ENCODE measurements at regions of chr17 and their contacts with region 1.

Region 1: DNA sequence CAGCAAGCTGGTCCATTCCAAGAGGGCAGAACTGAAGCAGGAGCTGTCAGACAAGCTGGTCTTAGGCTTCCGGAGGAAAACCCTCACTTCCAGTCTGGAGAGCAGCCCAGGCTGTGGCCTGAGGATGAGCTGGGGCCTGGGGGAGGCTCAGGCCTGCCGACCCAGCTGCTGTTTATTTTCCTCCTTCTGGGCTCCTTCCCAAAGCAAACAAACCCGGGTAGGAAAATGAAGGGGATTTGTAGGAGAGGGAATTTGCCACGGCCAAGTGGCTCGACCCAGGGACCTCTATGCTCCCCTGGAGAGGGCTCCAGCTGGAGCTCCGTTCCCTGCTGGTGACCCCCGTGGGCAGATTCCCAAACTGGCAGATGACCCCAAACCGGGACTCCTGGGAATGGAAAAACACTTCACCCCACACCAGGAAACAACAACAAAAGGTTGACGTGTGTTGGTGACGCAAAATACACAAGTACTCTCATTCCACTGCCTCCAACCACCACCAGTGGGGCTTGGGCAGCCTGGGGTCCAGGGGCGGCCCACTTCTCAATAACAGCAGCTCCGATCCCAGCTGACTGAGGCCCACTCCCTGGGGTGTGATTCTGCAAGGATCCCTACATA is 8.8 kb downstream of the JUP start:
- DNase-seq: peak; percentile 85

Region 2: DNA sequence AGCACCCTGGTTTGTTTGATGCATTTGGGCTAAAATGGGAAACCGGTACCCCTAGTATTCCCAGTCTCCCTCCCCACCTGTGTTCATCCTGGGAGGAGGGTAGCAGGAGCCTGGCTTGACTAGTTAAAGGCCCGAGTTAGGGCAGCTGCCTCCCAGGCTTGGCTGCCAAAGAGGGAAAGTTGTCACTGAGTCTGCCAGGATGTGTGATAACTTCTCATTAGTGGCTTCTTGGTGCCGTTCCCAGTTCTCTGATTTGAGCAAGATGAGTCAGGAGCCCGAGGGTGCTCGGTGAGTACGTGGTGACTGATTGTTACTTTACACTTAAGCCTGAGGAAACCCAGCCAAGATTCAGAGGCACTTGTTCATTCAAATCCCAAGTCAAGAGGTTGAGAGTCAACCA is 313.0 kb before region 1 on chr17:
- intact Hi-C with region 1: no loop called
- DNase-seq: no peak

Region 3: DNA sequence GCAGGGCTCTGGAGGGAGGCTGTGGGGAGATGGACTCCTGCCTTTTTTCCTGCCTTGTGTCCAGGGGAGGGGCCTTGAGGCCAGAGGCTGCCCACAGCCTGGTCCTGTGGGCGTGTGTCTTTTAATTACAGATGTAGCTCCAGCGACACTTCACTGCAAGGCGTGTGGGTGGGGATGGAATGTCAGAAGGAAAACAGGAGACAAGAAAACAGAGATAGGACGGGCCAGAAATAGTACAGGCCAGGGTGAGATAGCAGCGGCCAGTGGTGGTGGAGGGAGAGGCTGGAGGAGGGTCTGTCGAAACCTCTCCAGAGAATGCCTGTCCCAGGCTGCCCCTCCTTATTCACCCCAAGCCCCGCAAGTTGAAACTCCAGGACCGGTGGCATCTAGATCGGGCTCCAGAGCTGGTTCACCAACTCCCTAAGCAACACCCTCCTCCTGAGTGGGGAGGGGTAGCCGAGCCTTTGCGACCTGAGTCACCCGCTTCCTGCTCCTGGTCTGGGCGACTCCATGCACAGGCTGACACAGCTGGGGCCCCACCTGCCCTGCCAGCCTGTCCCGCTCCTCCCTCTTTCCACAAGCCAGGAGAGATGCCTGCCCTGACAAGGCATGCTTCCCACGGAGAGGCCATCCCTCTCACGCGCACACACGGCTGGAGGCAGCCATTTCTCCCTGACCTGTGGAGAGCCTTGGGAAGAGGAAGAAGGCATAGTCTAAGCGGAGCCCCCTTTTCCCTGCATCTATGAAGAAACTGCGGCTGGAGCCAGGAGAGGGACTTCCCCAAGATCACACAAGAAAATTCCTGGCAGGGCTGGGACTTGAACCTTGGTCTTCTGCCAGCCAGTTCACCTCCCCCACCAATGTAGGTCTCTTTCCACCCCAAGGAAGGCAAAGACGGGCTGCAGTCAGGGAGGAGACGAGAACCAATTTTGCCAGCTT is 15.4 kb after region 1 on chr17:
- intact Hi-C with region 1: loop called (anchors 1 kb)
- DNase-seq: peak; percentile 85

Region 4: DNA sequence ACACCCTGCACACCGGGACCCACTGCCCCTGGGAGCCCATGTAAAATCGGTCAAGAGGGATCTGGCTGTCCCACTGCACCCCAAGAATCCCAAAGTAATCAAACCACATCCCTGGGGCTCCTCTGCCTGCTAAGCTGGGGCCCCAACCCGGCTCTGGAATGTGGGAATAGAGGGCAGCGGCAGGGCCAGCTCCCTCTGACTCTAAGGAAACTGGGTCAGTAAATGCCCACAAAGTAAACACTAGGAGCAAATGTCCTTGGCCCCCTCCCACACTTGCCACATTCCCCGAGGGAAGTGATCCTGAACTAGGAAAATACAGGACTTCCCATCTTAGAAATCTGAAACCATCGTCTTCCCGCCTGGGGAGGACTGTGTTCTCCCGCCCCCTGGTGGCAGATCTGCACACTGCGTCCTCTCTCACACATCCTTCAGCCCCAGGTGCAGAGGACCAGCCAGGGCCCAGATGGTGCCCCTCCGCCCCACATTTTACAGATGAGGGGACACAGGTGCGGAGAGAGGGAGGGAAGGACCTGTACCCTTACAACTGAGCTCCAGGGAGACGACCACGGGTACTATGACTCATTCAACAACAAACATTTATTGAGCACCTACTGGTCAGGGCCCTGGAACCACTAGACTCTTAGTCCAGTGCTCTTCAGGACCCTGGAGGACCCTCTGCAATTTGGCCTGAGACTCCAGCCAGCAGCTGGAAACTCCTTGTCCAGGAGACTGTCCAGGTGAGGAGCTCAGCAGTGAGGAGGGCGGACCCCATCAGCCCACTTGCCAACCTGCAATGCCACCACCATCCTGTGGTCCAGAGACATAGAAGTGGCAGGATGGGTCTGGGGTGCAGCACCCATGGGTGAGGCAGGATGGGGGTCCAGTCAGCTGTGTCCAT is 23.9 kb after region 1 on chr17:
- intact Hi-C with region 1: loop called (anchors 1 kb)
- DNase-seq: peak; percentile 89

Measured in cardiac septum (tissue), 1 donor.